ENCODE measurements at regions of chr12 and their contacts with region 1.

Region 1: GRCh38 chr12:7219599-7220243 is 30.2 kb downstream of the PEX5 start:
- DNase-seq: no peak
- H3K4me3 ChIP-seq: no peak overlapping the region
- H3K27ac ChIP-seq: no peak overlapping the region
- H3K4me1 ChIP-seq: no peaks in the 10 kb centered on the region
- H3K27me3 ChIP-seq: no peaks in the 10 kb centered on the region
- CTCF ChIP-seq: peak; percentile 57 to 84 (median 82)
- POLR2A ChIP-seq: no peak

Region 2: DNA sequence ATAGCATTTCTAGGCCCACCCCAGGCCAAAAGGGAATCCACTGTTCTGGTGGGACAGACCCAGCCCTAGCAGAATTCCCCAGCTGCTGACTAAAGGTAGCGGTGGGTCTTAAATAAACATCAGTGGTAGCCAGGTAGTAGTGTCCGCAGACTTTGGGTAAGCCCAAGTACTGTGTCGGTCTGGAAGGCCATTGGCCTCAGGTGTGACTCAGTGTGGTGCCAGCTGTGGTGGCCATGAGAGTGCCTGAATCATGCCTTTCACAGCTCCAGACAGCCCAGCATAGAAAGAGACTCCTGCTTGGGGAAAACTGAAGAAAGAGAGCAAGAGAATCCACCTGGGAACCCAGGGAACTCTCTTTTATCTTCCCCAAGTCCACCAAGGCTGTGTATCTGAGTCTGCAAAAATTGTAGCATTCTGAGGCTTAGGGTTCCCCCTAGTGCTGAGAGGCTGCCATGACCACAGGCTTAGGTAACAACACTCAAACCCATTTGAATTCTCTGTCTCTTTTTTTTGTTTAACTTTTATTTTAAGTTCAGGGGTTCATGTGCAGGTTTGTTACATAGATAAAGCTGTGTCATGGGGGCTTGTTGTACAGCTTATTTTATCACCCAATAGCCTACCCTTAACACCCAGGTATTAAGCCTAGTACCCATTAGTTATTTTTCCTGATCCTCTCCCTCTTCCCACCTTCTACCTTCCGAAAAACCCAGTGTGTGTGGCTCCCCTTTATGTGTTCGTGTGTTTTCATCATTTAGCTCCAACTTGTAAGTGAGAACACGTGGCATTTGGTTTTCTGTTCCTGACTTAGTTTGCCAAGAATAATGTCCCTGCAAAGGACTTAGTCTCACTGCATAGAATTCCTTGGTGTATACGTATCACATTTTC is 240.9 kb after region 1 on chr12:
- intact Hi-C with region 1: loop called (anchors 5 kb)
- DNase-seq: no peak
- H3K4me3 ChIP-seq: no peak overlapping the region
- H3K27ac ChIP-seq: no peak overlapping the region
- H3K4me1 ChIP-seq: no peaks in the 10 kb centered on the region
- H3K27me3 ChIP-seq: no peaks in the 10 kb centered on the region
- CTCF ChIP-seq: peak in 5 of 6 experiments; percentile 43 to 76 (median 72)
- POLR2A ChIP-seq: no peak

Region 3: GRCh38 chr12:7642876-7643309 is 423.2 kb after region 1 on chr12:
- intact Hi-C with region 1: loop called (anchors 5 kb)
- DNase-seq: no peak
- H3K4me3 ChIP-seq: no peak overlapping the region
- H3K27ac ChIP-seq: no peak overlapping the region
- H3K4me1 ChIP-seq: peaks cover 0 to 12% (median 0%) of the 10 kb centered on the region in 3 donors
- H3K27me3 ChIP-seq: peaks cover 0 to 7% (median 0%) of the 10 kb centered on the region in 4 donors
- CTCF ChIP-seq: peak in 5 of 6 experiments; percentile 32 to 66 (median 39)
- POLR2A ChIP-seq: no peak

Region 4: DNA sequence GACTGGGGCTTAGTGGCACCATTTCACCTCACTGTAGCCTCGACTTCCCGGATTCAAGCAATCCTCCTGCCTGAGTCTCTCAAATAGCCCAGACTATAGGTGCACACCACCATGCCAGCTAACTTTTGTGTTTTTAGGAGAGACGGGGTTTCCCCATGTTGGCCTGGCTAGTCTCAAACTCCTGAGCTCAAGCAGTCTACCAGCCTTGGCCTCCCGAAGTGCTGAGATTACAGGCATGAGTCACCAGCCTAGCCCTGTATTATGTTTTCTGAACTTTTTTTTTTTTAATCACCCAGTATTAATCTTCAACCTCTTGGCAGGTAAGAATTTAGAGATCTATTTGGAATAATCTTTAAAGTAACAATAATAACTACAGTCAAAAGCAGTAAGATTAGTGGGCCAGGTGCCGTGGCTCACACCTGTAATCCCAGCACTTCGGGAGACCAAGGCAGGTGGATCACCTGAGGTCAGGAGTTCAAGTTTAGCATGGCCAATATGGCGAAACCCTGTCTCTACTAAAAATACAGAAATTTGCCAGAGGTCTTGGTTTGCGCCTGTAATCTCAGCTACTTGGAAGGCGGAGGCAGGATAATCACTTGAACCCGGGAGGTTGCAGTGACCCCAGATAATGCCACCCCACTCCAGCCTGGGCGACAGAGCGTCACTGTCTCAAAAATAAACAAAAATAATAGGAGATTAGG is 578.1 kb after region 1 on chr12:
- intact Hi-C with region 1: no loop called
- DNase-seq: no peak
- H3K4me3 ChIP-seq: no peak overlapping the region
- H3K27ac ChIP-seq: no peak overlapping the region
- H3K4me1 ChIP-seq: peaks cover 0 to 4% (median 0%) of the 10 kb centered on the region in 3 donors
- H3K27me3 ChIP-seq: peaks cover 0 to 40% (median 0%) of the 10 kb centered on the region in 4 donors
- CTCF ChIP-seq: no peak
- POLR2A ChIP-seq: no peak

Measured in esophagus squamous epithelium (tissue), 5 donors.